Activated T-helper 1 cell treated with anti-CD3 and anti-CD28 coated beads, Interleukin-12 subunit alpha, Interleukin-12 subunit beta, Interleukin-2, Interleukin-4 antibody, amounts not matched to agents 30 ng/mL and 10 ng/mL and 1 ng/mL, durations not matched to agents 14 hours and 24 hours and 36 hours (primary cell): ENCODE measurements at regions of chr10 and their contacts with region 1.

Region 1: GRCh38 chr10:7243873-7244272 is 167.0 kb downstream of the SFMBT2 start:
- DNase-seq: no peak
- H3K4me3 Mint-ChIP-seq: peak overlapping the region; percentile 23
- H3K27ac Mint-ChIP-seq: peak overlapping the region; percentile 5
- H3K4me1 Mint-ChIP-seq: peaks cover 54% of the 10 kb centered on the region
- H3K27me3 Mint-ChIP-seq: no peaks in the 10 kb centered on the region

Region 2: GRCh38 chr10:6929148-6929830 is 314.6 kb before region 1 on chr10:
- intact Hi-C with region 1: loop called (anchors 5 kb)
- DNase-seq: no peak
- H3K4me3 Mint-ChIP-seq: peak overlapping the region; percentile 19
- H3K27ac Mint-ChIP-seq: no peak overlapping the region
- H3K4me1 Mint-ChIP-seq: peaks cover 54% of the 10 kb centered on the region
- H3K27me3 Mint-ChIP-seq: peaks cover 6% of the 10 kb centered on the region

Region 3: DNA sequence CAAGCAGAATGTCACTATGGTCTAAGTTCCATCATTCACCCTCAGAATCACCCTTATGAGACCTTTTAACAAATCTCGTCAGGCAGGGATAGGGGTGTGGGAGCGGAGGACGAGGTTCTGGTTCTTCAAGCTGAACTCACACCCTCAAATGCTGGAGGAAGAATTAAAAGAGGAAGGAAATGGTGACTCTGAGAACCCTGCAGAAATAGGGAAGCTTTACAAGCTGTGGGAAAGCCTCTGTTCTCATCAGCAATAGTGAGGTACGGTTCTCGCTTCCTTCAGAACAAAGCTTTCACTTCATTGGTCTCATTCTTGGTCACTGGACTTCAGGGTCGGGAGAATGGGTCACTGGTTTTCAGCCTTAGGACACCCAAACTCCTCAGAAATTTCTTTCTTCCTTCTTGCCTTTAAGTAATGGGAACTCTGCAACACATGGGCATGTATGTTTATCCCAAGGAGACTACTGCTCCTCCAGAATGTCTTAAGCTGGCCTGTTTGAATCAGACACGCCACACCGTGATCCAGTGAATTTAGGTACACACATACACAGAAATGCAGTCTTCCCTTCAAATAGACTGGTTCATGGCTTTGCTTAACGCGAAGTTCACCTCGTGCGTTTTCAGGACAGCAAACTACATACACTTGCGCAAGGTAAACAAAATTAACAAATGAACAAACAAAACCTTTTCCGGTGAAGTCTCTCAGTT is 59.1 kb before region 1 on chr10:
- intact Hi-C with region 1: loop called (anchors 1 kb)
- DNase-seq: no peak
- H3K4me3 Mint-ChIP-seq: peak overlapping the region; percentile 34
- H3K27ac Mint-ChIP-seq: peak overlapping the region; percentile 61
- H3K4me1 Mint-ChIP-seq: peaks cover 59% of the 10 kb centered on the region
- H3K27me3 Mint-ChIP-seq: no peaks in the 10 kb centered on the region

Region 4: DNA sequence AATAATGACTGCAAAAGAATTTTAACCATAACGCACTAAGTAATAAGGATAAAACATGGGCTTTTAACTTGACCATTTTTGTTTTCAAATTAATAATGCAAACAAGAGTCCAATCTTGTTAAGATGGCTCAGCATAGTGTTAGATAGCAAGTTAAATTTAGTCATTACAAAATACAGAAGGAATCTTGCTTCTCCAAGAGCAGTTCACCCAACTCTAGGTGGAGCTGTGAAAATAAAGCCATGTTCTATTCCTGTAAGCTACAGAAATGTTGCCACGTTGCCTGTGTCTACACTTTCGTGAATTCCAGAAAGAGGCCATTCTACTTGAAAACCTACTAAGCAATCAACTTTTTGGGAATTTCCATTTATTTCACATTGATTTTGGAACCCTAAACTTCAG is 24.9 kb before region 1 on chr10:
- intact Hi-C with region 1: loop called (anchors 2 kb)
- DNase-seq: no peak
- H3K4me3 Mint-ChIP-seq: no peak overlapping the region
- H3K27ac Mint-ChIP-seq: no peak overlapping the region
- H3K4me1 Mint-ChIP-seq: peaks cover 6% of the 10 kb centered on the region
- H3K27me3 Mint-ChIP-seq: no peaks in the 10 kb centered on the region

Region 5: DNA sequence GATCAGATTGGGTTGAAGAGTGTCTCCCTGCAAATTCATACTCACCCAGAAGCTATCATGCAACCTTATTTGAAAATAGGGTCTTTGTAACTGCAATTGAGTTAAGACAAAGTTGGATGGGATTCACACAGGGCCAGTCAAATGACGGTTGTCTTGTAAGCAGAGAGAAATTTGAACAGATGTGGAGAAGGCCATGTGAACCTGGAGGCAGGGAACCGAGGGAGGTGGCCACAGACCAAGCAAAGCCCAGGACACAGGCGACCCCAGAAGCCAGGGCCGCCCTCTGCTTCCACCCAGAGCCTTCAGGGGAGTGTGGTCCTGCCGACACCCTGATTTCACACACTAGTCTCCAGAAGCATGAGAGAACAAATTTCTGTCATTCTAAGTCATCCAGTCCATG is 26.1 kb after region 1 on chr10:
- intact Hi-C with region 1: loop called (anchors 1 kb)
- DNase-seq: no peak
- H3K4me3 Mint-ChIP-seq: peak overlapping the region; percentile 15
- H3K27ac Mint-ChIP-seq: peak overlapping the region; percentile 94
- H3K4me1 Mint-ChIP-seq: peaks cover 65% of the 10 kb centered on the region
- H3K27me3 Mint-ChIP-seq: no peaks in the 10 kb centered on the region